ENCODE measurements at regions of chr9 and their contacts with region 1.

Region 1: DNA sequence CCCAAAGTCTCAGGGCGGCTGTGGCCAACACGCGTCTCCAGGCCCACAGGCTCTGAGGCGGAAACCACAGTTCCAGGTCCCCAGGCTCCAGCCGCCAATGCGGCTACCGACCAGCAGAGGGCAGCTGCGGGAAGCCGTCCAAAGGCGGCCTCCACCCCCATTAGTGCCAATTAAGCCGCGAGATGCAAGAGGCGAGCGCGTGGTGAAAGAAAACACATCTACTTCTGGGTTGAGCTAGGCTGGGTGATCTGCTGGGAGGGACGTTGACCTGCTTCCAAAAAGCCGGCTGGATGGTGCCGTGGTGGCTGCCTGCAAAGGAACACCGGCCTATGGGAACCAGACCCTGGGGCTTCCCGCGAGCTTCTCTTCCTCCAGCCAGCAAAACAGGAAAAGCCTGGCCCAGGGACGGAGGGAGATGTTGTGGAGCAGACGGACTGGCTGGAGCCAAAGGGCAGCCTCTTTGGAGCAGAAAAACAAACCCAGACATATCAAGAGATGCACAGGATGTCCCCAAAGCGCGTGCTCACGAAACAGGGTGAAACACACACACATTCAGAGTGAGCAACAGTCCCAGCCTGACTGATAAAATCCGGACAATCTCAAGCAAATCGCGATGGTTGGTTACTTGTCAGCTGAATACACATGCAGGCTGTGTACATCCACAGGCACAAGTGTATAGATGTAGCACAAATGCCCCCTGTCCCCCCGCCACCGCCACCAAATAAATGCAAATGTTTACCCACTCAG is 187.1 kb upstream of the BRINP1 start:
- DNase-seq: peak; percentile 87
- H3K4me3 ChIP-seq: peak overlapping the region in 3 of 8 donors; percentile 17 to 58 (median 29)
- H3K27ac ChIP-seq: peak overlapping the region in 4 of 8 donors; percentile 6 to 36 (median 18)
- H3K4me1 ChIP-seq: peaks cover 0 to 11% (median 3%) of the 10 kb centered on the region in 6 donors
- H3K27me3 ChIP-seq: peaks cover 0 to 50% (median 0%) of the 10 kb centered on the region in 7 donors
- CTCF ChIP-seq: peak; percentile 43 to 91 (median 75)
- POLR2A ChIP-seq: no peak

Region 2: GRCh38 chr9:119652931-119653330 is 96.6 kb after region 1 on chr9:
- intact Hi-C with region 1: no loop called
- DNase-seq: no peak
- H3K4me3 ChIP-seq: no peak overlapping the region
- H3K27ac ChIP-seq: no peak overlapping the region
- H3K4me1 ChIP-seq: no peaks in the 10 kb centered on the region
- H3K27me3 ChIP-seq: no peaks in the 10 kb centered on the region
- CTCF ChIP-seq: no peak
- POLR2A ChIP-seq: no peak

Region 3: DNA sequence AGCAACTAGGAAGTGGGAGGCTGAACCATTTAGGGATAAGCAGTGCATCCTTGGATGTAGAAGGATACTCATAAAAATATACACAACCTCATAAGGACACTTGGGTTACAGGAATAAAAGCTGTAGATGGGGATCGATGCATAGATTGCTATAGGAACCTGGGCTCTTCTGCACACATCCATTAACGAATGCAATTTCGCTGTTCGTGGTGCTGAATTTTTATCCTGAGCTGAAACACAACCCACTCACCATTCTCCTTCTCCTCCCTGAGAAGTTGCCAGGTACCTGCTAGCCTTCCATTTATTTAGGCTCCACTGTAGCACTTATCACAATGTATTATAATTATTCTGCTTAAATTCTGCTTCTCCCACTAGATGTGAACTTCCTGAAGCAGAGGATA is 133.6 kb after region 1 on chr9:
- intact Hi-C with region 1: no loop called
- DNase-seq: no peak
- H3K4me3 ChIP-seq: no peak overlapping the region
- H3K27ac ChIP-seq: no peak overlapping the region
- H3K4me1 ChIP-seq: no peaks in the 10 kb centered on the region
- H3K27me3 ChIP-seq: no peaks in the 10 kb centered on the region
- CTCF ChIP-seq: no peak
- POLR2A ChIP-seq: no peak

Region 4: DNA sequence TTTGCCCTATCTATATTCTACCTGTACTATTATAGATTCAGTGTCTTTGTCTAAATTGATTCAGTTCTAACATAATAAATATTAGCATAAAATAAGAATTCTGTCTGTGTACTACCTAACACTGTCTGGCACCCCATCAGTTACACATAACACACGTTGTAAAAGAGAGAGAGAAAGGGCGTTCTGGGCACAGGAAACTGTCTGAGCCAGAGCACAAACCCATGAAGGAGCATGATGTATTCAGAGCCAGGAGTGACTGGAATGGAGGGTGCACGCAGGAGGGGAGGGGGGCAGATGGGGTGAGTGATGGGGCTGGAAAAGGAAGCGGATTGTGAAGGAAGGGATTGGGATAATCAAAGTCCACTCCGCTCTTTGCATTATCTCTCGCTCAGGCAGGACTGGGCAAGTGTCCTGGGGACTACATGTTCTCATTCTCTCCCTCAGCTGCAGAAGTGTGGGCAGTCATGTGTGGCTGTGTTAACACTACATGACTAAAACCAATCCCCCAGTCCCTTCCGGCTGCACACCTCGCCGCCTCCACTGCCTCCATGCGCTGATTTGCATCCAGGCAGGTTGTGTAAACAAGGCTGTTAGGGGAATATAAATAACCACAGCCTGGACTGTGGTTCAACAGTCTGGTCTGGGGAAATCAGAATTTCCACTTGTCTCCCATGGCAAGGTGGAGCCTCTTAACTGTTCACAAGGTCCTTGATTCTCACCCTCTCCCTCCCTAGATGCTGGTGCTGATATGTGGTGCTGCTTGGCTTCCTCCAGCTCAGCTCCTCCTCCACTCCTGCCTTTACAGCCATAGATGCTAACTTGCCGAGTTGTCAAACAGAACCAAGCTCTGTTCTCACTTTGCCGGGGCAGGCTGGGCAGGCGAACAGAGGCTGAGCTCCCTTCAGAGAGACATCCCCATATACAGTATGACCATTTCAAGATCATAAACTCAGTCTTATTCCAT is 180.5 kb after region 1 on chr9:
- intact Hi-C with region 1: no loop called
- DNase-seq: peak; percentile 76
- H3K4me3 ChIP-seq: no peak overlapping the region
- H3K27ac ChIP-seq: peak overlapping the region in 1 of 8 donors; percentile 24
- H3K4me1 ChIP-seq: no peaks in the 10 kb centered on the region
- H3K27me3 ChIP-seq: no peaks in the 10 kb centered on the region
- CTCF ChIP-seq: no peak
- POLR2A ChIP-seq: no peak

Region 5: GRCh38 chr9:119974026-119974425 is 417.7 kb after region 1 on chr9:
- intact Hi-C with region 1: loop called (anchors 10 kb)
- DNase-seq: no peak
- H3K4me3 ChIP-seq: no peak overlapping the region
- H3K27ac ChIP-seq: no peak overlapping the region
- H3K4me1 ChIP-seq: peaks cover 0 to 2% (median under 1%) of the 10 kb centered on the region in 6 donors
- H3K27me3 ChIP-seq: peaks cover 0 to under 1% (median 0%) of the 10 kb centered on the region in 7 donors
- CTCF ChIP-seq: no peak
- POLR2A ChIP-seq: no peak

Region 6: DNA sequence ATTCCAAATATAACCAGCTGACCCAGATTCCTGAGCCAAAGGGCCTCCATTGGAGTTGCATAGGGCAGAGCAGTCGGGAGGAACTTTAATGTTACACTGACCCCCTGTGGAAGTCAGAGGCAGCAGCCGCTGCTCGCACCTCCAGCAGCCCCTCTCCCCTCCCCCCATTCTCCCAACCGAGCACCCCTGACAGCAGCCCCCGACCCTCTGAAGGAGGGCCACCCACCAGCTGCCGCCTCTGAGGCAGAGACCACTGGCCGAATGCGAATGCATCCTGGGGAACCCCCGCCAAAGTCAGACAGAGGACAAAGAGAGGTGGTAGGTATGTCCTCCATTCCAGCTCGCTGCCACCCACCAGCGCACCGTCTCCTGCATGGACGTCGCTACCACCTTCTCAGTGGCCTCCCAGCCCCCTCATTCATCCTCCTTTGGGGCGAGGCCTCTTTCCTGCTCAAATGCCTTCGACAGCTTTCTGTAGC is 792.7 kb after region 1 on chr9:
- intact Hi-C with region 1: loop called (anchors 10 kb)
- DNase-seq: no peak
- H3K4me3 ChIP-seq: no peak overlapping the region
- H3K27ac ChIP-seq: no peak overlapping the region
- H3K4me1 ChIP-seq: peaks cover 0 to 6% (median 0%) of the 10 kb centered on the region in 6 donors
- H3K27me3 ChIP-seq: peaks cover 0 to 10% (median 0%) of the 10 kb centered on the region in 7 donors
- CTCF ChIP-seq: peak in 8 of 11 experiments; percentile 27 to 56 (median 43)
- POLR2A ChIP-seq: no peak